ENCODE measurements at regions of chr6 and their contacts with region 1.

Region 1: GRCh38 chr6:112780498-112781096 is 433.5 kb downstream of the RFPL4B start:
- DNase-seq: peak; percentile 60
- ATAC-seq: peak; percentile 91
- H3K4me3 ChIP-seq: no peak overlapping the region
- H3K27ac ChIP-seq: no peak overlapping the region; the same call in 1 of the 2 replicates
- H3K4me1 ChIP-seq: no peaks in the 10 kb centered on the region
- H3K27me3 ChIP-seq: no peaks in the 10 kb centered on the region
- CTCF ChIP-seq: peak; percentile 90

Region 2: DNA sequence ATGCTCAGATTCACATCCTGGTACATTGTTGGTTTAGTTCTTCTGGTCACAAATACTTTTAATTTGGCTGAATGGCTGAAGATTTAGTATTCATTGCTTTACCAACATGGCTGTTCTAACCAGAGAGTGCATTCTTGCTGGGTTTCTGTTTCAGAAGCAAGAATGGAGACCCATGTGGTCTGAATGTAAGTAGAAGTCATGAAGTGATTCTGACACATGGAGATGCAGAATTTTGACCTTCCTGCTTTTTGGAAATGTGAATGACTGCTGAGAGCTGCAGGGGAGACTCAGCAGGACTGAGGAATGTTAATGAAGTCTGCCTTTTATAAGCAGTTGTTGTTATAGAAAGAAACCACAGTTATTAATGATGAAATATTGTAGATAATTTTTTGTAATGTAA is 500.4 kb after region 1 on chr6:
- CTCF ChIA-PET with region 1: no interaction called
- POLR2A ChIA-PET with region 1: no interaction called
- in situ Hi-C with region 1: no loop called
- intact Hi-C with region 1: loop called (anchors 10 kb)
- DNase-seq: no peak
- ATAC-seq: peak; percentile 53; the same call in 1 of the 2 replicates
- H3K4me3 ChIP-seq: no peak overlapping the region
- H3K27ac ChIP-seq: no peak overlapping the region
- H3K4me1 ChIP-seq: no peaks in the 10 kb centered on the region
- H3K27me3 ChIP-seq: no peaks in the 10 kb centered on the region
- CTCF ChIP-seq: no peak